Mammary epithelial cell (primary cell): ENCODE measurements at regions of chr19 and their contacts with region 1.

Region 1: DNA sequence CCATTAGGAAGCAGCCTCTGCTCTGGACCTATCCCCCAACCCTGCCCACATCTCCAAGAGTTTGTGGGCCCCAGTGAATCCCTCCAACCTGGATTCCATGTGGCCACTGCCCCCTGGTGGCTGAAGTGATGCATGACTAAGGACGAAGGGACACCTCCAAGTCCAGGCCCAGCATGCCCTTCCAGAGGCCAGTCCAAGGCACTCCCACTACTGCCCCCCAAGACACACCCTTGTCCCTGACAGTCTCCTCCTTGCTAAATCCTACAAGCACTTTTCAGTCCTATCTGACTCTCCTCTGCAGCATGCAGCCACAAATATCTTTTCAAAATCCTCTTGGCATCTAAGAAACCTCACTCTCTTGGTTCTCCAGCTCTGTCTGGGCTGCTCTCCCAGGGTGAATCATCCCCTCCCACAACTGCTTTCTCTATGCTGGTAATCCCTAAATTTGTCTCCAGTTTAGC is 33.0 kb downstream of the DEDD2 start:
- DNase-seq: peak; percentile 62
- H3K4me3 ChIP-seq: no peak overlapping the region
- H3K27ac ChIP-seq: no peak overlapping the region
- H3K4me1 ChIP-seq: peaks cover 11% of the 10 kb centered on the region
- H3K27me3 ChIP-seq: no peaks in the 10 kb centered on the region
- CTCF ChIP-seq: peak; percentile 93 to 95

Region 2: DNA sequence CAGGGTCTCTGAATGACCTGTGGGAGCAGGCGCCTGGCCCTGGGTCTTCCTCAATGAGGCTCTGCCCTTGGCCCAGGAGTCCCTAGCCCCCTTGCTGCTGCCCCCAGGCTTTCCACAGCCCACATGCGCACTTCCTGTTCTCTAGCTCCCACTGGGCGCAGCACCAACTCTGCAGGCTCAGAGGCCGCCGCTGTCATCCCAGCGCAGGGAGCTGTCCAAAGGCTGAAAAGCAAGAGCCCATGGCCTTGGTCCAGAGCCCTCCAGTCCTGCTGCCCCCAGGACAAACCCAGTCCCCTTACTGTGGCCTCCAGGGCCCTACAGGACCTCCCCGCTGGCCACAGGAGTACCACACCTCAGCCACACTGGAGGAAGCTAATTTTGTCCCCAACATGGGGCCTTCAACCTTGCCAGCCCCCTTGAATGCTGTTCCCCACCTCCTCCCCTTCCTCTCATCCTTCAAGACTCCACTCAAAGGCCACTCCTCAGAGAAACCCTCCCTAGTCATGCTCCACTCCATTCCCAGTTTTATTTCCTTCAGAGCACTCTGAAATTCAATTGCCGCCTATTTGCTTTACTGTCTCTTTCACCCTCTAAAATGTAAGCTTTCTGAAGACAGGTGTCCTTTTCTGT is 44.2 kb before region 1 on chr19:
- CTCF ChIA-PET with region 1: no interaction called
- dilution Hi-C with region 1: loop called (anchors 5 kb)
- in situ Hi-C with region 1: no loop called
- intact Hi-C with region 1: no loop called
- DNase-seq: peak; percentile 39
- H3K4me3 ChIP-seq: no peak overlapping the region
- H3K27ac ChIP-seq: no peak overlapping the region
- H3K4me1 ChIP-seq: no peaks in the 10 kb centered on the region
- H3K27me3 ChIP-seq: no peaks in the 10 kb centered on the region
- CTCF ChIP-seq: no peak